HEK293T (cell line): ENCODE measurements at regions of chr6 and their contacts with region 1.

Region 1: GRCh38 chr6:31901953-31902643 is at the start of gene ZBTB12:
- DNase-seq: peak; percentile 87

Region 2: DNA sequence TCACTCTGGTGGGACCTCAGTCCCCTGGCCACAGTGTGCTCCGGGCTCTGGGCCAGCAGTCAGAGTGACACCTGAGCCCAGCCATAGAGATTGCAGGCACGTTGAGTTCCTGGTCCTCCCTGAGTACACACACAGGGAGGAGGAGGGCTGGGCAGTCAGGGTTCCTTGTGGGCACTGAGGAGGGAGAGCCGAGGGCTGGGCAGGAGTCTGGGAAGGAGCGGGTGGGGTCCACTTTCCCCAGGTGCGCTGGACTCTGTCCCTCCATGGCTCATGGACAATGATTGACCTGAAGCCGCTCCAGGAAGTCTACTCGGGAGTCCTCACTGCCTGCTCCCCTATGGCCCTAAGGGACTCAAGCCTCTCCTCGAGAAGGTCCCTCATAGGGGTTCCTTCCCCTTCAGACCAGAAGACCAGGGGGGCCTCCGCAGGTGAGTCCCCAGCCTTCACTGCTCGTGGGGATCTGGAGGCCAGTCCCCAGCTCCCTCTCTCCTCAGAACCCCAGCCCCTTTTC is 24.4 kb before region 1 on chr6:
- CTCF ChIA-PET with region 1: no interaction called
- POLR2A ChIA-PET with region 1: no interaction called
- DNase-seq: no peak

Region 3: DNA sequence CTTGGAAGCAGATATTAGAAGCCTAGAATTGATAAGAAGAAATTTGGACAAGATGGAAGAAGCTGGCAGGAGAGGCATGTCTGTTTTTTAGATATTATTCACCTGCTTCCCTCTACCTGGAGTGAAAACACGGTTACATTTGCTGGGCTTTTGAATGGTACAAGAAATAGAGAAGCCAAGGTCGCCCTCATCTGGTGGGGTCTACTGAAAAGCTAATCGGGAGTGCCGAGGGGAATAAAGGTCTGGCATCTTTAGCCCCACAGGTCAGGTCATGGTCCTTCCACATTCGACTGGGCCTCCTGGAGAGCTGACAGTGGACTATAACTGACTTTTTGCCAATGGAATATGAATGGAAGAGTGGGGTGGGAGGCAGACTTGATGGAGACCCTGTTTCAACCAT is 20.8 kb after region 1 on chr6:
- CTCF ChIA-PET with region 1: interaction called, 3 read pairs
- POLR2A ChIA-PET with region 1: interaction called, 14 read pairs
- DNase-seq: no peak